Body of pancreas (tissue), 4 donors: ENCODE measurements at regions of chr4 and their contacts with region 1.

Region 1: GRCh38 chr4:121736735-121737351 is 28.1 kb downstream of the SMIM43 start:
- DNase-seq: peak; percentile 23 to 66 (median 28)
- ATAC-seq: peak; percentile 75
- H3K4me3 ChIP-seq: no peak overlapping the region
- H3K27ac ChIP-seq: no peak overlapping the region
- H3K4me1 ChIP-seq: no peaks in the 10 kb centered on the region
- H3K27me3 ChIP-seq: no peaks in the 10 kb centered on the region
- CTCF ChIP-seq: peak; percentile 8 to 55 (median 46)
- POLR2A ChIP-seq: no peak

Region 2: GRCh38 chr4:121370729-121371325 is 366.0 kb before region 1 on chr4:
- intact Hi-C with region 1: loop called (anchors 10 kb)
- DNase-seq: peak; percentile 33 to 66 (median 48)
- ATAC-seq: peak; percentile 58
- H3K4me3 ChIP-seq: no peak overlapping the region
- H3K27ac ChIP-seq: no peak overlapping the region
- H3K4me1 ChIP-seq: no peaks in the 10 kb centered on the region
- H3K27me3 ChIP-seq: no peaks in the 10 kb centered on the region
- CTCF ChIP-seq: peak; percentile 25 to 69 (median 51)
- POLR2A ChIP-seq: no peak

Region 3: DNA sequence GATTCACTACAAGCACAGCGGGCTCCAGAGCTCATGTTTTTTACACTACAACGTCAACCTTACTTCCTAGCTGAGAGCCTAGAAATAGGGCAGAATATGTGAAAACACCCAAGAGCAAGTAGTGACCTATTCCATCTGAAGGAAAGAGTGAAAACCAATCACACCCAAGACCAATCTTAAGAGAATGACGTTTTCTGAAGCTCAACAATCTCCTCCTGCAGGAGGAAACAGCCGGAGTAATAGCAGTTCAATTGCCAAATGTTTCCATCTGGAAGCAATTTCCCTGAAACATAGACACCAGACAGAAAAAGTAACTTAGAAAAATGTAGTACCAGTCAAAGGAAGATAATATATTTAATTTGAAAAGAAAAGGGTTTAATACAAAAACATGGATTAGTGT is 182.5 kb before region 1 on chr4:
- intact Hi-C with region 1: no loop called
- DNase-seq: no peak
- ATAC-seq: no peak
- H3K4me3 ChIP-seq: no peak overlapping the region
- H3K27ac ChIP-seq: no peak overlapping the region
- H3K4me1 ChIP-seq: no peaks in the 10 kb centered on the region
- H3K27me3 ChIP-seq: no peaks in the 10 kb centered on the region
- CTCF ChIP-seq: no peak
- POLR2A ChIP-seq: no peak